ENCODE measurements at regions of chr15 and their contacts with region 1.

Region 1: GRCh38 chr15:82749951-82750830 is 40.5 kb upstream of the AP3B2 start:
- DNase-seq: peak; percentile 93
- H3K4me3 Mint-ChIP-seq: peak overlapping the region; percentile 95
- H3K27ac Mint-ChIP-seq: peak overlapping the region; percentile 92
- H3K4me1 Mint-ChIP-seq: peaks cover 24% of the 10 kb centered on the region
- H3K27me3 Mint-ChIP-seq: no peaks in the 10 kb centered on the region
- CTCF ChIP-seq: no peak

Region 2: DNA sequence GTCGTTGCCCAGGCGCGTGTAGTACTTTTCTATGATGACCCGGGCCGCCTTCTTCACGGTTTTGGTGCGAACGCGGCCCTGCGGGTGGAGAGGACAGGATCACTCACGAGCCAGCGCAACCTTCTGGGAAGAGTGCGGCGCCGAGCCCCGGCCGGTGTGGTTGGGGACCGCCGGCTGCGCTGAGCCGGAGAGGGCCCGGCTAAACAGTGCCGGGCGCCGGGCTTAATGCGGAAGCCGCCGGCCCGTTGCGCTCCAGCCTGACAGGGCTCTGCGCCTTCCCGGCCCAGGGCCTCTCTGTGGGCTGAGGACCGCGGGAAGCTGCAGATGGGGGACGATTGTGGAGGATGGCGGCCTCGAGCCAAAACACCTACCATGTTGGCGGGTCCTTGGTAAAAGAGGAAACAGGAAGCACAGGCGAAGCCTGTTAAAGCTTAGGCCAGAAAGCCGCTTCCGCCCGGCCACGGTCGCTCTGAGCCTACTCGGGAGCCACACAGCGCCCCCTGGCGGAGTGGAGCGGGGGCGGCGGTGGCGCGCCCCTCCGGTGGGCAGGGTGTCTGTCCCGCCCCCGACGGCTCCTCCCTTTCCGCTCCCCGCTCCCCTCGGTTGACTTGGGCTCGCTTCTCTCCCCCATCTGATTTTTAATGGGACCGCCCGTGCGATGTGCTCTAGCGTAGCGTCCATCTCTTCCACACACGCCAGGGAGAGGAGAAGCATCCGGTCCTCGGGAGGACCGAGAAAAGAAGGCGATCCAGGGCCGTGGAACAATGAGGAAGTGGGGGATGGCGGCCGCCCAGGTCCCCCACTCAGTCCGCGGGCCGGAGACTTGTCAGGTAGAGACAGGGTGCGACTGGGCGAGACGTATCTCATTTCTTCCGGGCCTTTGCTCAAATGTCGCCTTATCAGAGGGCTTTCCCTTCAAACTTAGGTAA is 209.9 kb before region 1 on chr15 and contains the start of gene RPS17:
- CTCF ChIA-PET with region 1: interaction called, 4 read pairs
- POLR2A ChIA-PET with region 1: interaction called, 183 read pairs
- intact Hi-C with region 1: loop called (anchors 1 kb)
- DNase-seq: peak; percentile 95
- H3K4me3 Mint-ChIP-seq: peak within 1 kb of the TSS; percentile 92
- H3K27ac Mint-ChIP-seq: peak within 1 kb of the TSS; percentile 81
- H3K4me1 Mint-ChIP-seq: peaks cover 30% of the 10 kb centered on the region
- H3K27me3 Mint-ChIP-seq: no peaks in the 10 kb centered on the region
- CTCF ChIP-seq: peak; percentile 99
- total RNA-seq, gene RPS17: 2,707 and 3,065 TPM in 2 replicates

Region 3: GRCh38 chr15:82680200-82681102 is 69.7 kb before region 1 on chr15:
- CTCF ChIA-PET with region 1: interaction called, 3 read pairs
- POLR2A ChIA-PET with region 1: interaction called, 12 read pairs
- intact Hi-C with region 1: no loop called
- DNase-seq: peak; percentile 58
- H3K4me3 Mint-ChIP-seq: peak overlapping the region; percentile 77
- H3K27ac Mint-ChIP-seq: peak overlapping the region; percentile 80
- H3K4me1 Mint-ChIP-seq: no peaks in the 10 kb centered on the region
- H3K27me3 Mint-ChIP-seq: peaks cover 14% of the 10 kb centered on the region
- CTCF ChIP-seq: peak; percentile 18

Region 4: GRCh38 chr15:82737975-82738374 is 12.2 kb before region 1 on chr15:
- CTCF ChIA-PET with region 1: interaction called, 3 read pairs
- POLR2A ChIA-PET with region 1: interaction called, 119 read pairs
- intact Hi-C with region 1: no loop called
- DNase-seq: no peak
- H3K4me3 Mint-ChIP-seq: no peak overlapping the region
- H3K27ac Mint-ChIP-seq: no peak overlapping the region
- H3K4me1 Mint-ChIP-seq: peaks cover 13% of the 10 kb centered on the region
- H3K27me3 Mint-ChIP-seq: no peaks in the 10 kb centered on the region
- CTCF ChIP-seq: no peak

Region 5: GRCh38 chr15:82768428-82769081 is 18.4 kb after region 1 on chr15:
- CTCF ChIA-PET with region 1: interaction called, 3 read pairs
- POLR2A ChIA-PET with region 1: interaction called, 20 read pairs
- intact Hi-C with region 1: no loop called
- DNase-seq: peak; percentile 35
- H3K4me3 Mint-ChIP-seq: no peak overlapping the region
- H3K27ac Mint-ChIP-seq: peak overlapping the region; percentile 10
- H3K4me1 Mint-ChIP-seq: peaks cover 6% of the 10 kb centered on the region
- H3K27me3 Mint-ChIP-seq: no peaks in the 10 kb centered on the region
- CTCF ChIP-seq: no peak

Region 6: DNA sequence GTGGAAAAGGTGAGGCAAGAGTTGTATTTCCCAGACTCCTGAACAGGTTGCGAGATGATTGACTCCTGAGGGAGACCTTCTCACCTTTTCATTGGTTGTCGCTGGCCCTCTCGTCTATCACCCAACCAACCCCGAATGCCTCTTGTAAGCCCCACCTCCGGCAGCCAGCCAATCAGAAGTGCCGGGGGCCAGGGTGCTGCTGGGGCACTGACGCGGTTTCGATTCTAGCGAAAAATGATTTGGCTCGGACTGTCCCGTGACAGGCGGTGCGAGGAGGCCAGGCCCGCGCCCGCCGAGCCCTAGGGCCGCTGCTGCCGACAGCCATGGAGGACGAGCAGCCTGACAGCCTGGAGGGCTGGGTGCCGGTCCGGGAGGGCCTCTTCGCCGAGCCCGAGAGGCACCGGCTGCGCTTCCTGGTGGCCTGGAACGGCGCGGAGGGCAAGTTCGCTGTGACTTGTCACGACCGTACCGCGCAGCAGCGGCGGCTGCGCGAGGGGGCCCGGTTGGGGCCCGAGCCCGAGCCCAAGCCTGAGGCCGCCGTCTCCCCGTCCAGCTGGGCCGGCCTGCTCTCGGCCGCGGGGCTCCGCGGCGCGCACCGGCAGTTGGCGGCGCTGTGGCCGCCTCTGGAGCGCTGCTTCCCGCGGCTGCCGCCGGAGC is 59.3 kb after region 1 on chr15 and contains the start of gene WHAMM:
- CTCF ChIA-PET with region 1: interaction called, 7 read pairs
- POLR2A ChIA-PET with region 1: interaction called, 182 read pairs
- intact Hi-C with region 1: loop called (anchors 2 kb)
- DNase-seq: peak; percentile 100
- H3K4me3 Mint-ChIP-seq: peak within 1 kb of the TSS; percentile 84
- H3K27ac Mint-ChIP-seq: peak within 1 kb of the TSS; percentile 84
- H3K4me1 Mint-ChIP-seq: peaks cover 22% of the 10 kb centered on the region
- H3K27me3 Mint-ChIP-seq: no peaks in the 10 kb centered on the region
- CTCF ChIP-seq: no peak
- total RNA-seq, gene WHAMM: 8.2 and 10.1 TPM in 2 replicates

Region 7: DNA sequence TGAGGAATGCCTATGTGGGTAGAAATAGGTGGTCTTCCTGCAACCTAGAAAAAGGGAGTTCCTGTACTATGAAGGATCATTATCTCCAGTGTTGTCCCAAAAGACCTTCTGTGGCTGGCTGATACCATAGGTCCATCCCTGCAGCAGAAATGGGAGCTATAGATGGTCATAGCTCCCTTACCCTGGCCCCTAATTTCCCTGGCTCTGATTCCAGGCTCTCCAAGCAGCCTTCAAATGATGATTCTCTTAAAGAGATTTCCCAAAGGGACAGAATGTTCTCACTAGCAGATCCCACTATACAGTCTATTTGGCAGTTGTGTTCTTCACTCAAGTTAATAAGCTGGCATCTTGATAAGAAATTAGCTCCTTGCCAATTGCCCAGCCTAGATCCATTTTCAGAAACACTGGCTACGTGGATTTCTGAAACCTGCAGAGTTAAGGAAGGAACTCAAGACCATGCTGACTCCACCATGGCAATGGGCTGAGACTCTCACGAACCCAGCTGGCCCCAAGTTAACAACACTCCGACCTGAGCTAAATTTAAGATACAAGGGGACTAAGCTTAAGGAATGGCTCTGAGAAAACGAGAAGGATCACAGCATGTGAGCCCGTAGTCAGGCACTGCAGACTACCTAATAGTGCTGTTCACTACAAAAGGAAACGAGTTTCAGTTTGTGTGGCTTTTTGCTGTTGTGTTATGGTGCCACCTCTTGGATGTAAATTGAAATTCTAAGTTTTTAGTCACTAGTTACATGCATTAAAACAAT is 249.9 kb after region 1 on chr15:
- CTCF ChIA-PET with region 1: interaction called, 3 read pairs
- POLR2A ChIA-PET with region 1: interaction called, 10 read pairs
- intact Hi-C with region 1: no loop called
- DNase-seq: peak; percentile 59
- H3K4me3 Mint-ChIP-seq: peak overlapping the region; percentile 67
- H3K27ac Mint-ChIP-seq: peak overlapping the region; percentile 69
- H3K4me1 Mint-ChIP-seq: no peaks in the 10 kb centered on the region
- H3K27me3 Mint-ChIP-seq: no peaks in the 10 kb centered on the region
- CTCF ChIP-seq: peak; percentile 57